Colonic mucosa (tissue), 4 donors: ENCODE measurements at regions of chr19 and their contacts with region 1.

Region 1: DNA sequence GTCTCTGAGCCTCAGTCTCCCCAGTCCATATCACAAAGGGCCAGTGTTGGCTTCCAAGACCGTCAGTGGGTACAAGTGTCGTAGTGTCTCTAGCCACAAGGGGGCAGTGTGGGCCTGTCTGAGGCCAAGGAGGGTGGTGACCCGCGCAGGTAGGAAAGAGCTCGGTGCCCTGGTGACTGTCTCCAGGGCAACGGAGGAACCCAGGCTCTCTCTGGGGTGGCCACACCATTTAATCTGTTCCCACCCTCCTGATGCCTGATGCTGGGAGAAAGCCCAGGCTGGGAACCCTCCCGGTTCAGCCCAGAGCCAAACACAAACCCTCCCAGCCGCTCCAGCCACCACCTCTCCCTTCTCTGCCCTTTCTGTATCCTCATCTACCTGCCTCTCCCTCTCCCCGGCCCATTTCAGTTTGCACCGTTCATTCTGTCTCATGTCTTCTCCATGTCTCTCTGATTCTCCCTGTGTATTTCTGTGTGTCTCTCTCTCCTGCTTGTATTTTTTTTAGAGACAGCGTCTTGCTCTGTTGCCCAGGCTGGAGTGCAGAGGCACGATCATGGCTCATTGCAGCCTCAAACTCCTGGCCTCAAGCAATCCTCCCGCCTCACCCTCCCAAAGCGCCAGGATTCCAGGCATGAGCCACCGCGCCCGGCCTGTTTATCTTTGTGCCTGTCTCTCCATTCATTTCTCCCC is 17.5 kb upstream of the MEIS3 start:
- DNase-seq: peak; percentile 82
- H3K4me3 ChIP-seq: no peak overlapping the region
- H3K27ac ChIP-seq: no peak overlapping the region
- H3K4me1 ChIP-seq: no peaks in the 10 kb centered on the region
- H3K27me3 ChIP-seq: no peaks in the 10 kb centered on the region
- CTCF ChIP-seq: peak; percentile 82

Region 2: DNA sequence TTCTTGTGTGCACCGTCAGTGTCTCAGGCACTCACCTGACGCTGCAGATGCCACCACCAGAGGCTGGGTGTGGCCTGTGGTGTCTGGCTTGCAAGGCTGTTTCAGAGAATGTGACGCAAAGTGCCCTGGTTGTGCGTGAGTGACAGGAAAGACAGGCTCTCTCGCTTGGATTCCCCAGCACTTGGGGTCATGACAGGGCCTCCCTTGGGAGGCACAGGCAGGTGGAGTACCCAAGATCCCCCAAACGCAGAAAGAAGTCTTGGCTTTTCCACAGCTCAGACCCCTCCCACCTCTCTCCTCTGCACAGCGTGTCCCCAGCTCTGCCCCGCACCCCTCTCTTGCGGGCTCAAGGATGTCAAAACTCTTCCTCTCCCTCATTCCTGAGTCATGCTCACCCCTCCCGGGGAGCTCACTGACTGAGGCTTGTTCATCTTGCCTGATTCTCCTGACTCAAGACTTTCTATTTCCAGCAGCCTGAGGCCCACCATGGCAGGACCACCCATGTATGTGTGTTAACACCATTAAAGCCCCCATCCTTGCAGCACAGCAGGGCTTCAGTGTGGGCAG is 66.7 kb before region 1 on chr19:
- intact Hi-C with region 1: no loop called
- DNase-seq: no peak
- H3K4me3 ChIP-seq: no peak overlapping the region
- H3K27ac ChIP-seq: no peak overlapping the region
- H3K4me1 ChIP-seq: no peaks in the 10 kb centered on the region
- H3K27me3 ChIP-seq: no peaks in the 10 kb centered on the region
- CTCF ChIP-seq: no peak

Region 3: GRCh38 chr19:47514869-47515588 is 78.2 kb after region 1 on chr19 and contains the start of gene NAPA:
- intact Hi-C with region 1: loop called (anchors 5 kb)
- DNase-seq: peak; percentile 100
- H3K4me3 ChIP-seq: peak within 1 kb of the TSS; percentile 92
- H3K27ac ChIP-seq: peak within 1 kb of the TSS; percentile 82
- H3K4me1 ChIP-seq: peaks cover 12% of the 10 kb centered on the region
- H3K27me3 ChIP-seq: no peaks in the 10 kb centered on the region
- CTCF ChIP-seq: no peak
- total RNA-seq, gene NAPA: 111 to 115 TPM

Region 4: GRCh38 chr19:47707135-47707925 is 270.5 kb after region 1 on chr19:
- intact Hi-C with region 1: loop called (anchors 2 kb)
- DNase-seq: peak; percentile 80
- H3K4me3 ChIP-seq: no peak overlapping the region
- H3K27ac ChIP-seq: no peak overlapping the region
- H3K4me1 ChIP-seq: no peaks in the 10 kb centered on the region
- H3K27me3 ChIP-seq: no peaks in the 10 kb centered on the region
- CTCF ChIP-seq: peak; percentile 79